Activated naive CD4-positive, alpha-beta T cell treated with anti-CD3 and anti-CD28 coated beads for 36 hours (primary cell): ENCODE measurements at regions of chr2 and their contacts with region 1.

Region 1: GRCh38 chr2:211157856-211158463 is 601.6 kb downstream of the CPS1 start:
- DNase-seq: peak; percentile 86
- H3K4me3 Mint-ChIP-seq: no peak overlapping the region
- H3K27ac Mint-ChIP-seq: no peak overlapping the region
- H3K4me1 Mint-ChIP-seq: no peaks in the 10 kb centered on the region
- H3K27me3 Mint-ChIP-seq: no peaks in the 10 kb centered on the region

Region 2: DNA sequence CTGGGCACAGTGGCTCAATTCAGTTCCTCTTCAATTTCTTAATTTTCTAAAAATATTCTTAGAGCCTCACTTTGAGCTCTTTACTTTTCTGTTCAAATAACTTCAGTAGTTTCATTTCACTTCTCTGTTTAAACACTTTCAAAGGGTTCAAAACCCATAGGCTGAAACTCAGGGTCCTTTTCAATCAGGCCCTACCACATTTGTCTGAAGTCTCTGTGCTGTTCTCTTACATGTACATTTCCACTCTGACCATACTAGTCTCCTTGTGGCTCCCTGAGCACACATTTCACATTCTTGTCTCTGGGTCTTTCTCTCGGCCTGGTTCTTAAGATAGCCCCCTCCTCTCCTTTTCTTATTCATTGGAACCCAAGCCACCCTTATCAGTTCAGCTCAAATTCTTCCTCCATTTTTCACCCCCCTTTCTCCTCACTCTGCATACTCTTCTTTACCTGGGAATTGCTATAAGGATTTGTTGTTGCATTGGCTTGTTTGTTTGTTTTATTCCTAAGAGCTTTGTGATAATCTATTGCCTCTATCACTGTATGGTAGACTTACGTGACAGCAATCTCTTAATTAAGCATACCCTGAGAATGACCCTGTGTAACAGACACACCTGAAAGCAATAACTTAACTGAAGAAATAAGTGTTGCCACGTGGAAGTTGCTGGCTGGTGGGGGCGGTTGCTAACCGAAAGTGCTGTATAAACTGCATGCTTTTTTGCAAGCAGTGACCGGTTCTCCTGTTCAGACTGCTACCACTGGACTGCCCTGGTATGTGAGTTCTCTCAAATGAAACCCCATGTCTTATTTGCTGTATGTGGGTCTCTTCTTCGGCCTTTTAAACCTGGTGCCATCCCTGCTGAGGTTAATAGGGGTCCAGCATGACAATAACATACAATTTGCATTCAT is 905.0 kb before region 1 on chr2:
- CTCF ChIA-PET with region 1: no interaction called
- intact Hi-C with region 1: loop called (anchors 2 kb)
- DNase-seq: no peak
- H3K4me3 Mint-ChIP-seq: no peak overlapping the region
- H3K27ac Mint-ChIP-seq: no peak overlapping the region
- H3K4me1 Mint-ChIP-seq: no peaks in the 10 kb centered on the region
- H3K27me3 Mint-ChIP-seq: peaks cover 2% of the 10 kb centered on the region

Region 3: GRCh38 chr2:210445116-210445707 is 712.7 kb before region 1 on chr2:
- CTCF ChIA-PET with region 1: interaction called, 3 read pairs
- intact Hi-C with region 1: loop called (anchors 2 kb)
- DNase-seq: no peak
- H3K4me3 Mint-ChIP-seq: no peak overlapping the region
- H3K27ac Mint-ChIP-seq: no peak overlapping the region
- H3K4me1 Mint-ChIP-seq: peaks cover 4% of the 10 kb centered on the region
- H3K27me3 Mint-ChIP-seq: no peaks in the 10 kb centered on the region

Region 4: GRCh38 chr2:210503001-210503623 is 654.8 kb before region 1 on chr2:
- CTCF ChIA-PET with region 1: no interaction called
- intact Hi-C with region 1: loop called (anchors 1 kb)
- DNase-seq: peak; percentile 52
- H3K4me3 Mint-ChIP-seq: peak overlapping the region; percentile 49
- H3K27ac Mint-ChIP-seq: no peak overlapping the region
- H3K4me1 Mint-ChIP-seq: peaks cover 7% of the 10 kb centered on the region
- H3K27me3 Mint-ChIP-seq: peaks cover 25% of the 10 kb centered on the region

Region 5: DNA sequence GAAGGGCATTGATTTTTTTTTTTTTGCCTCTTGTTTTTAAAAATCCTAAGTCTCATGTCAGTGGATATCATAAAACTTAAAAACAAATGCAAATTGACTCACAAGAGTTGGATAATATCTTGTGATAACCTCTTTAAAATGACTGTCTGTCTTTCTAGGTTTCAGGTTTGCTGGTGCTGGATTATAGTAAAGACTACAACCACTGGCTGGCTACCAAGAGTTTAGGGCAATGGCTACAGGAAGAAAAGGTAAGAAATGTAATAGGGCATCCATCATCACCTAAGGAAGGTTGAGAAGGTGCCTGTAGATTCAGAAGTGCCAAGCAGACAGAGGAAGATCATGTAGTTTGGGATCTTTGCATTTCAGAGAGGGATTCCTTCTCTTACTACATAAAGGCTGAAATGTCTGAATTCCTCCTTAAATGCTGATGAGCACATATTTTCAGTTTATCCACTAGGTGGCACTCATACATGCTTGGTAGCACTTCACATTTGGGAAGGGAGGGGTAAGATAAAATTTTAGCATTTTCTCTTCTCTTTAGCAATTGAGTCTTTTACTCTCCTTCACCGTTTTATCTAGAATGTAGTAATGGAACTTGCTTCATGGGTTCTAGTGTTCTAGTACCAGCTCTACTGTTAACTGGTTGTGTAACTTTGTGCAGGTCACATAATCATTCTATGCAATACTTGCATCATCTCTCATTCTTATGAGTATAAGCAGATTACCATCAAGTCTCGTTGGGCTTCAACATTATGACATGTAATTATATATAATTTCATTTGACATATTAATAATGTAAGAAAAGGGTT is 580.5 kb before region 1 on chr2:
- CTCF ChIA-PET with region 1: no interaction called
- intact Hi-C with region 1: loop called (anchors 1 kb)
- DNase-seq: no peak
- H3K4me3 Mint-ChIP-seq: no peak overlapping the region
- H3K27ac Mint-ChIP-seq: no peak overlapping the region
- H3K4me1 Mint-ChIP-seq: no peaks in the 10 kb centered on the region
- H3K27me3 Mint-ChIP-seq: peaks cover 5% of the 10 kb centered on the region

Region 6: GRCh38 chr2:210617732-210618330 is 540.1 kb before region 1 on chr2:
- CTCF ChIA-PET with region 1: no interaction called
- intact Hi-C with region 1: loop called (anchors 1 kb)
- DNase-seq: peak; percentile 9
- H3K4me3 Mint-ChIP-seq: no peak overlapping the region
- H3K27ac Mint-ChIP-seq: no peak overlapping the region
- H3K4me1 Mint-ChIP-seq: no peaks in the 10 kb centered on the region
- H3K27me3 Mint-ChIP-seq: no peaks in the 10 kb centered on the region

Region 7: DNA sequence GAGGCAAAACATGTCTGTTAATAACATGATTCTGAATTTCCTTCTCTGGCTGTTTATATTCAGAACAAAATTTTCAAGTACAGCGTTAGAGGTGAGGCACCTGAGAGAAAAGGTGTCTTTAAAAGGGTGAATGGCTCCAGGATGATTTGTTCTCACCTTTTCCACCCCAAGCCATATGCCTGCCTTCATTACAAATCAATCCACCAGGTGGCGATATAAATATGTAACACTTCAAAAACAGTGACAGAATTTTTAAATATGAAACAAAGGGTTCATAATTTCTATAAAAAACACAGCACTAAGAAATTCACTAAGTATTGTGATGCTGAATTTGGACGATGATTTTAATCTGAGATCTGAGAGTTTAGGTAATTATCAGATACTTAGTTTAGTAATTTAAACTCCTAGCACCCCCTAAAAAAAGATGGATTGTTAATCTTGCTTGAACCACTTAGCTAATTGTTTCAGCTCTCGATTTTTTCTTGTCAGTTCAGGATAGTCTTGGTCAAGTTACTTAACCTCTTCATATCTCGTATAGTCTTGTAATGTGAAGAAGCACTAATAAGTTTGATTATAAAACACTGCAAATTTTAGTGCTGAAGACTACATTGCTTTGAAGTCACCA is 72.8 kb before region 1 on chr2:
- CTCF ChIA-PET with region 1: interaction called, 3 read pairs
- intact Hi-C with region 1: loop called (anchors 1 kb)
- DNase-seq: no peak
- H3K4me3 Mint-ChIP-seq: no peak overlapping the region
- H3K27ac Mint-ChIP-seq: no peak overlapping the region
- H3K4me1 Mint-ChIP-seq: no peaks in the 10 kb centered on the region
- H3K27me3 Mint-ChIP-seq: no peaks in the 10 kb centered on the region